CD4-positive, alpha-beta memory T cell (primary cell): ENCODE measurements at regions of chr1 and their contacts with region 1.

Region 1: GRCh38 chr1:113072757-113073478 is at the start of gene LRIG2:
- DNase-seq: peak; percentile 95 to 99 (median 96)
- H3K4me3 ChIP-seq: peak within 1 kb of the TSS; percentile 85 to 95
- H3K4me3 Mint-ChIP-seq: peak within 1 kb of the TSS; percentile 97 to 99 (median 98)
- H3K27ac ChIP-seq: peak within 1 kb of the TSS; percentile 80
- H3K27ac Mint-ChIP-seq: peak within 1 kb of the TSS; percentile 95 to 99 (median 97)
- H3K4me1 ChIP-seq: peaks cover 35% of the 10 kb centered on the region
- H3K4me1 Mint-ChIP-seq: peaks cover 15 to 54% (median 29%) of the 10 kb centered on the region in 4 donors
- H3K27me3 ChIP-seq: no peaks in the 10 kb centered on the region
- H3K27me3 Mint-ChIP-seq: peaks cover 0 to 1% of the 10 kb centered on the region in 2 donors
- total RNA-seq, gene LRIG2: 24.2 to 27.9 TPM

Region 2: GRCh38 chr1:112715264-112716053 is 357.5 kb before region 1 on chr1 and contains the start of gene PPM1J:
- CTCF ChIA-PET with region 1: interaction called, 56 read pairs
- POLR2A ChIA-PET with region 1: interaction called, 31 read pairs
- intact Hi-C with region 1: loop called (anchors 2 kb)
- DNase-seq: peak; percentile 96 to 97 (median 97)
- H3K4me3 ChIP-seq: peak within 1 kb of the TSS; percentile 58 to 72
- H3K4me3 Mint-ChIP-seq: peak within 1 kb of the TSS; percentile 81 to 96 (median 93)
- H3K27ac ChIP-seq: peak within 1 kb of the TSS; percentile 43
- H3K27ac Mint-ChIP-seq: peak within 1 kb of the TSS; percentile 81 to 96 (median 93)
- H3K4me1 ChIP-seq: peaks cover 22% of the 10 kb centered on the region
- H3K4me1 Mint-ChIP-seq: peaks cover 12 to 29% (median 19%) of the 10 kb centered on the region in 4 donors
- H3K27me3 ChIP-seq: peaks cover 8% of the 10 kb centered on the region
- H3K27me3 Mint-ChIP-seq: peaks cover 0 to 2% of the 10 kb centered on the region in 2 donors
- total RNA-seq, gene PPM1J: 0.76 TPM in 1 of 2 experiments, not detected in the other

Region 3: GRCh38 chr1:112955781-112956543 is 117.0 kb before region 1 on chr1 and contains the start of gene SLC16A1:
- CTCF ChIA-PET with region 1: interaction called, 22 read pairs
- POLR2A ChIA-PET with region 1: interaction called, 10 read pairs
- intact Hi-C with region 1: loop called (anchors 2 kb)
- DNase-seq: peak; percentile 85 to 89 (median 87)
- H3K4me3 ChIP-seq: peak within 1 kb of the TSS; percentile 59 to 96
- H3K4me3 Mint-ChIP-seq: peak within 1 kb of the TSS; percentile 76 to 99 (median 97)
- H3K27ac ChIP-seq: peak within 1 kb of the TSS; percentile 80
- H3K27ac Mint-ChIP-seq: peak within 1 kb of the TSS; percentile 68 to 98 (median 95)
- H3K4me1 ChIP-seq: peaks cover 34% of the 10 kb centered on the region
- H3K4me1 Mint-ChIP-seq: peaks cover 38 to 73% (median 52%) of the 10 kb centered on the region in 4 donors
- H3K27me3 ChIP-seq: no peaks in the 10 kb centered on the region
- H3K27me3 Mint-ChIP-seq: no peaks in the 10 kb centered on the region
- total RNA-seq, gene SLC16A1: 9.7 to 12.7 TPM

Region 4: DNA sequence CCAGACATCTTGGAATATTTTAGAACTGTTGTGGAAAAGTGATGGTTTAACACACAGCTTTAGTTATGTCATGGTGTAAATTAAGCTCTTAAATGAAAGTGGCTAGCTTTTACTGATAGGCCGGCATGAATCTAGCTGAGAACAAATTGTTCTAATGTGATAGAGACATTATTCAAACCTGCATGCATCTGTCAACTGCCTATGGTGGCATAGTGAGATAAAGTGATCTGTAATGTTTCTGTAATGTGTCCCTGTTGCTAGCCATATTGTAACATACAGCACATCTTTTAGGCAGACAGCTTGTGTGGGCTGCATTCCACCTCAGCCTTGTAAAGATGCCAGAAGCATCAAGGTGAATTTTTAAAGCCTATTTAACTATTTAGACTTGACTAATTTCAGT is 16.1 kb after region 1 on chr1:
- CTCF ChIA-PET with region 1: interaction called, 18 read pairs
- POLR2A ChIA-PET with region 1: interaction called, 3 read pairs
- intact Hi-C with region 1: no loop called
- DNase-seq: no peak
- H3K4me3 ChIP-seq: no peak overlapping the region
- H3K4me3 Mint-ChIP-seq: no peak overlapping the region
- H3K27ac ChIP-seq: no peak overlapping the region
- H3K27ac Mint-ChIP-seq: peak overlapping the region in 1 of 7 donors; percentile 13
- H3K4me1 ChIP-seq: no peaks in the 10 kb centered on the region
- H3K4me1 Mint-ChIP-seq: peaks cover 24 to 37% (median 33%) of the 10 kb centered on the region in 4 donors
- H3K27me3 ChIP-seq: no peaks in the 10 kb centered on the region
- H3K27me3 Mint-ChIP-seq: no peaks in the 10 kb centered on the region

Region 5: DNA sequence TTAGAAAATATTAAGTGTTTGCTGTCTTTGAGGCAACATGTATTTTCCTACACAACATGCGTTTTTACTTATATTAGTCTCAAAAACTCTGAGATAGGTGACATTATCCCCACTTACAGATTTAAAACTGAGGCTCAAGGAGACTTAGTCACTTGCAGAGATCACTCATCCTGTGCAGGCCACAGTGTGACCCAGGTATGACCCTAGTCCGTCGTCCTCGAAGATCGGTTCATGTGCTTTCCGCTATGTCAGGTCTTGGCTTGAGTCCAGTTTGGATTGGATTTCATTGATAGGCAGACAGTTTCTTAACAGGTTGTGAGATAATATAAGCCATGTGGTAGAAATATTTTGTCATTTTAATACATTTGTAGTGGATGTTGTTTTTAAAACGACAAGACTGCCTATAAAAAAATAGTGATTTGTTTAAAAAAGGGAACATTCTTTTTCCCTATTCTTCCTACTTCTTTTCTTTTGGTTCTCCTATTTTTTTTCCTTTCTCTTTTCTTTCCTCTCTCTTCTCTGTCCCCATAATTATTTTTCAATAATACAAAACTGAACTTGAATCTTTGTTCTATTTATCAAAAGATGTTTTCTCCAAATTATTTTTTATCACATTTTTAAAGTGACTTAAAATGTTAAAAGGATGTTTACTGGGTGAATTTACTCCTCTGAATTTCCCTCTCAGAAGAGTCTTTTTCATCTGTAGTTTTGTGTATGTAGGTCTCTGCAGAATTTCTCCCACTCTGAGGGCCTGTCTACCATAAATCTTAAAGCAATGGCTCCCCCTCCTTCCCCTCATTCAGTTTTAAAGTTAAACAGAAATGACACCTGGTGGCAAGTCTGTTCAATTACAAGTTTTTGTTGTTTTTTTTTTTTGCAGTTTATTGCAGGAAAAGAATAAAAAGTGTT is 604.6 kb after region 1 on chr1:
- CTCF ChIA-PET with region 1: interaction called, 10 read pairs
- POLR2A ChIA-PET with region 1: no interaction called
- intact Hi-C with region 1: loop called (anchors 2 kb)
- DNase-seq: peak in 4 of 5 donors; percentile 16 to 29 (median 28)
- H3K4me3 ChIP-seq: no peak overlapping the region
- H3K4me3 Mint-ChIP-seq: no peak overlapping the region
- H3K27ac ChIP-seq: no peak overlapping the region
- H3K27ac Mint-ChIP-seq: no peak overlapping the region
- H3K4me1 ChIP-seq: no peaks in the 10 kb centered on the region
- H3K4me1 Mint-ChIP-seq: peaks cover 0 to 2% (median under 1%) of the 10 kb centered on the region in 4 donors
- H3K27me3 ChIP-seq: no peaks in the 10 kb centered on the region
- H3K27me3 Mint-ChIP-seq: no peaks in the 10 kb centered on the region

Region 6: GRCh38 chr1:114581335-114582287 is 1508.7 kb after region 1 on chr1 and contains the start of gene BCAS2:
- CTCF ChIA-PET with region 1: no interaction called
- POLR2A ChIA-PET with region 1: no interaction called
- intact Hi-C with region 1: loop called (anchors 2 kb)
- DNase-seq: peak; percentile 93 to 98 (median 97)
- H3K4me3 ChIP-seq: peak within 1 kb of the TSS; percentile 76 to 80
- H3K4me3 Mint-ChIP-seq: peak within 1 kb of the TSS; percentile 95 to 99 (median 96)
- H3K27ac ChIP-seq: peak within 1 kb of the TSS; percentile 90
- H3K27ac Mint-ChIP-seq: peak within 1 kb of the TSS; percentile 92 to 100 (median 99)
- H3K4me1 ChIP-seq: peaks cover 30% of the 10 kb centered on the region
- H3K4me1 Mint-ChIP-seq: peaks cover 14 to 42% (median 27%) of the 10 kb centered on the region in 4 donors
- H3K27me3 ChIP-seq: no peaks in the 10 kb centered on the region
- H3K27me3 Mint-ChIP-seq: peaks cover 0 to 1% of the 10 kb centered on the region in 2 donors
- total RNA-seq, gene BCAS2: 33.9 to 40.8 TPM